CD14-positive monocyte (primary cell): ENCODE measurements at regions of chr20 and their contacts with region 1.

Region 1: GRCh38 chr20:4607287-4607713 is 114.4 kb upstream of the PRND start:
- DNase-seq: peak; percentile 64 to 76 (median 71)
- H3K4me3 ChIP-seq: no peak overlapping the region
- H3K4me3 Mint-ChIP-seq: peak overlapping the region in 1 of 2 donors; percentile 54
- H3K27ac ChIP-seq: no peak overlapping the region
- H3K27ac Mint-ChIP-seq: peak overlapping the region in 2 of 7 donors; percentile 19 to 43
- H3K4me1 ChIP-seq: peaks cover 13 to 22% of the 10 kb centered on the region in 2 donors
- H3K4me1 Mint-ChIP-seq: peaks cover 21% of the 10 kb centered on the region
- H3K27me3 ChIP-seq: peaks cover 0 to 7% of the 10 kb centered on the region in 2 donors
- H3K27me3 Mint-ChIP-seq: peaks cover 4 to 13% (median 6%) of the 10 kb centered on the region in 3 donors
- CTCF ChIP-seq: peak; percentile 93

Region 2: GRCh38 chr20:4283016-4283415 is 324.3 kb before region 1 on chr20:
- intact Hi-C with region 1: no loop called
- DNase-seq: no peak
- H3K4me3 ChIP-seq: no peak overlapping the region
- H3K4me3 Mint-ChIP-seq: no peak overlapping the region
- H3K27ac ChIP-seq: no peak overlapping the region
- H3K27ac Mint-ChIP-seq: no peak overlapping the region
- H3K4me1 ChIP-seq: no peaks in the 10 kb centered on the region
- H3K4me1 Mint-ChIP-seq: no peaks in the 10 kb centered on the region
- H3K27me3 ChIP-seq: no peaks in the 10 kb centered on the region
- H3K27me3 Mint-ChIP-seq: peaks cover 0 to 2% (median 2%) of the 10 kb centered on the region in 3 donors
- CTCF ChIP-seq: no peak

Region 3: GRCh38 chr20:4956200-4956810 is 349.0 kb after region 1 on chr20:
- intact Hi-C with region 1: loop called (anchors 5 to 10 kb)
- DNase-seq: peak; percentile 41 to 76 (median 59)
- H3K4me3 ChIP-seq: no peak overlapping the region
- H3K4me3 Mint-ChIP-seq: no peak overlapping the region
- H3K27ac ChIP-seq: no peak overlapping the region
- H3K27ac Mint-ChIP-seq: peak overlapping the region in 2 of 7 donors; percentile 6 to 49
- H3K4me1 ChIP-seq: peaks cover under 1% of the 10 kb centered on the region in 2 donors
- H3K4me1 Mint-ChIP-seq: peaks cover 12% of the 10 kb centered on the region
- H3K27me3 ChIP-seq: no peaks in the 10 kb centered on the region
- H3K27me3 Mint-ChIP-seq: no peaks in the 10 kb centered on the region
- CTCF ChIP-seq: peak; percentile 85